Activated CD4-positive, alpha-beta T cell treated with anti-CD3 and anti-CD28 coated beads for 36 hours (primary cell): ENCODE measurements at regions of chr1 and their contacts with region 1.

Region 1: GRCh38 chr1:167066333-167067122 is 23.6 kb downstream of the GPA33 start:
- DNase-seq: peak; percentile 87
- ATAC-seq: peak; percentile 95
- H3K4me3 Mint-ChIP-seq: no peak overlapping the region
- H3K27ac Mint-ChIP-seq: no peak overlapping the region
- H3K4me1 Mint-ChIP-seq: no peaks in the 10 kb centered on the region
- H3K27me3 Mint-ChIP-seq: no peaks in the 10 kb centered on the region

Region 2: DNA sequence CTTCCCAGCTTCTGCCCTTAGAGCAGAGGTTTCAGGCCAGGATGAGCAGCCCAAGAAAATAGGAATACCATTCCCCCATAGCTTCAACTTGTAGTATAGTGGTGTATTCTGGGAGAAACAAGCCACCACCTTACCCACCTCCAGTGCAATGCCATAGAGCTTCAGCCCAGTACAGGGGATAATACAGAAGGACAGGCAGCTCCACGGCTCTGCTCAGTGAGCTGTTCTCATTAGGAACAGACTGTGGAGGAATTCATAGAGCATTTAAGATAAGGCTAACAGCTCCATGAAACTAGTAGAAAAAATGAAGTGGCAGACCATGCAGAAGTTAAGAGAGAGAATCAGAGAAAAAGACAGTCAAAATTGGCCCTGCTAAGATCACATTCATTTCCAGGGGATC is 522.0 kb before region 1 on chr1:
- CTCF ChIA-PET with region 1: no interaction called
- POLR2A ChIA-PET with region 1: no interaction called
- intact Hi-C with region 1: no loop called
- DNase-seq: no peak
- ATAC-seq: no peak
- H3K4me3 Mint-ChIP-seq: no peak overlapping the region
- H3K27ac Mint-ChIP-seq: no peak overlapping the region
- H3K4me1 Mint-ChIP-seq: no peaks in the 10 kb centered on the region
- H3K27me3 Mint-ChIP-seq: peaks cover 5% of the 10 kb centered on the region

Region 3: GRCh38 chr1:167121375-167122120 is 55.0 kb after region 1 on chr1:
- CTCF ChIA-PET with region 1: interaction called, 6 read pairs
- POLR2A ChIA-PET with region 1: no interaction called
- intact Hi-C with region 1: loop called (anchors 1 kb)
- DNase-seq: peak; percentile 56
- ATAC-seq: peak; percentile 64
- H3K4me3 Mint-ChIP-seq: peak overlapping the region; percentile 65
- H3K27ac Mint-ChIP-seq: peak overlapping the region; percentile 66
- H3K4me1 Mint-ChIP-seq: no peaks in the 10 kb centered on the region
- H3K27me3 Mint-ChIP-seq: no peaks in the 10 kb centered on the region

Region 4: DNA sequence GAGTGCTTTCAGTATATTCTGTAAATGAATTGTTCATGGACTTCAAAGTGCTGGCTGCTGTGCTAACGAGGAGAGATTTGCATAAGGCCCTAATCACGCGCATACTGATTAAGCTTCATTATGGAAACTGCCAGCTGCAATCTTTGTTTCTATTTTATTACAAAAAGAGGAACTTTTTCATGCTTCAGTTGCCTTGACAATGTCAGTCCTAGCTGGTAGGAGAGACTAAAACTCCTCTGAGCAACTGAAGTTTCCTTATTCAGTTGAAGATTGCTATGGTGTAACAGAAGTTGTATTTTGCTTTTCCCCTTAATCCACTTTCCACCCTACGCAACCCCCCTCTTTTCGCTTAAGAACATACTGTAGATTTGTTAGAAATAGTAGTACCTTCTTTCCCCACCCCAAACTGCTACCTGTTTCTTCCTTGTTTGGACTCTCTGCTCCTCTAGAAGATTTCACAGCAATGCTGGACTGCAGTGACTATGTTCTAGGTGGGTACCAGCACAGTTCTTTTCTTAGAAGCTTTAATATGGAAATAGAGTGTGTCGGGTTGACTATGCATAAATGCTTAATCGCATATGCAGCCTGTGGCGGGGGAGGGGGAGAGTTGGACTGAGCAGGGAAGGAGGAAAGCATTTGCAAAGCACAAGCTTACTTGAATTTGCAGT is 262.4 kb after region 1 on chr1:
- CTCF ChIA-PET with region 1: no interaction called
- POLR2A ChIA-PET with region 1: no interaction called
- intact Hi-C with region 1: no loop called
- DNase-seq: peak; percentile 17
- ATAC-seq: no peak
- H3K4me3 Mint-ChIP-seq: no peak overlapping the region
- H3K27ac Mint-ChIP-seq: no peak overlapping the region
- H3K4me1 Mint-ChIP-seq: peaks cover 37% of the 10 kb centered on the region
- H3K27me3 Mint-ChIP-seq: no peaks in the 10 kb centered on the region

Region 5: DNA sequence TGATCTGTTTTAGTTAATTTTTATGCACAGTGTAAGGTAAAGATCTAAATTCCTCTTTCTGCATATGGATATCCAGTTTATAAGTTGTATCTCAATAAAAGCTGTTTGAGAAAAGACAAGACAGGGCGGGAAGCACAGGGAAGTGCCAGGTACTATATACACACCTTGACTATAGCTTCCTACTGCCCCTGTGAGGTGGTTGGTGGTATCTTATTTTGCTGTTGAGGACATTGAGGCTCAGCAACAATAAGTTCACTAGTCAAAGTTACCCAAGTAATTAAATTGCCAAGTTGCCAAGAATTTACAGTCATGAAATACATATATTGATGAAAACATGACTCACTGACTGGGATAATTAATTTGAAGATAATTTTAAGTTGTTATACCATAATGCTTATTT is 342.7 kb after region 1 on chr1:
- CTCF ChIA-PET with region 1: interaction called, 4 read pairs
- POLR2A ChIA-PET with region 1: no interaction called
- intact Hi-C with region 1: loop called in 1 of 2 experiments (anchors 5 kb)
- DNase-seq: no peak
- ATAC-seq: no peak
- H3K4me3 Mint-ChIP-seq: no peak overlapping the region
- H3K27ac Mint-ChIP-seq: no peak overlapping the region
- H3K4me1 Mint-ChIP-seq: peaks cover 19% of the 10 kb centered on the region
- H3K27me3 Mint-ChIP-seq: no peaks in the 10 kb centered on the region